Heart left ventricle (tissue), 16 donors: ENCODE measurements at regions of chr13 and their contacts with region 1.

Region 1: GRCh38 chr13:27533155-27533643 is 82.8 kb upstream of the MTIF3 start:
- DNase-seq: peak; percentile 79 to 92 (median 86)
- ATAC-seq: peak; percentile 79 to 98 (median 98)
- H3K4me3 ChIP-seq: peak overlapping the region in 9 of 12 donors; percentile 14 to 48 (median 37)
- H3K27ac ChIP-seq: no peak overlapping the region
- H3K4me1 ChIP-seq: peaks cover 0 to 8% (median 0%) of the 10 kb centered on the region in 12 donors
- H3K27me3 ChIP-seq: no peaks in the 10 kb centered on the region
- CTCF ChIP-seq: peak; percentile 86 to 97 (median 94)
- POLR2A ChIP-seq: no peak

Region 2: GRCh38 chr13:27374650-27375049 is 158.5 kb before region 1 on chr13:
- intact Hi-C with region 1: loop called in 4 of 10 experiments (anchors 5 to 10 kb)
- DNase-seq: peak in 4 of 5 donors; percentile 47 to 69 (median 58)
- ATAC-seq: peak; percentile 51 to 97 (median 96)
- H3K4me3 ChIP-seq: no peak overlapping the region
- H3K27ac ChIP-seq: no peak overlapping the region
- H3K4me1 ChIP-seq: peaks cover 0 to 5% (median 0%) of the 10 kb centered on the region in 12 donors
- H3K27me3 ChIP-seq: peaks cover 0 to 34% (median 14%) of the 10 kb centered on the region in 9 donors
- CTCF ChIP-seq: peak; percentile 61 to 86 (median 70)
- POLR2A ChIP-seq: no peak

Region 3: GRCh38 chr13:27406178-27406939 is 126.8 kb before region 1 on chr13:
- intact Hi-C with region 1: loop called in 3 of 10 experiments (anchors 10 kb)
- DNase-seq: no peak
- ATAC-seq: peak in 2 of 4 donors; percentile 31 to 47
- H3K4me3 ChIP-seq: no peak overlapping the region
- H3K27ac ChIP-seq: no peak overlapping the region
- H3K4me1 ChIP-seq: peaks cover 0 to 12% (median 7%) of the 10 kb centered on the region in 12 donors
- H3K27me3 ChIP-seq: peaks cover 0 to 9% (median 0%) of the 10 kb centered on the region in 9 donors
- CTCF ChIP-seq: peak; percentile 34 to 67 (median 52)
- POLR2A ChIP-seq: no peak

Region 4: GRCh38 chr13:27489456-27489855 is 43.7 kb before region 1 on chr13:
- intact Hi-C with region 1: no loop called
- DNase-seq: no peak
- ATAC-seq: no peak
- H3K4me3 ChIP-seq: no peak overlapping the region
- H3K27ac ChIP-seq: no peak overlapping the region
- H3K4me1 ChIP-seq: no peaks in the 10 kb centered on the region
- H3K27me3 ChIP-seq: no peaks in the 10 kb centered on the region
- CTCF ChIP-seq: no peak
- POLR2A ChIP-seq: no peak

Region 5: GRCh38 chr13:27620377-27621115 is 87.3 kb after region 1 on chr13 and contains the start of gene LNX2:
- intact Hi-C with region 1: loop called in 1 of 10 experiments (anchors 5 kb)
- DNase-seq: peak; percentile 98 to 99 (median 99)
- ATAC-seq: peak; percentile 98 to 100 (median 98)
- H3K4me3 ChIP-seq: peak within 1 kb of the TSS; percentile 66 to 98 (median 90)
- H3K27ac ChIP-seq: peak within 1 kb of the TSS; percentile 72 to 98 (median 96)
- H3K4me1 ChIP-seq: peaks cover 0 to 48% (median 33%) of the 10 kb centered on the region in 12 donors
- H3K27me3 ChIP-seq: no peaks in the 10 kb centered on the region
- CTCF ChIP-seq: peak in 1 of 12 donors; percentile 3
- POLR2A ChIP-seq: peak in 1 of 2 donors; percentile 96
- total RNA-seq, gene LNX2: 10.7 to 18.7 (median 14.9) TPM

Region 6: DNA sequence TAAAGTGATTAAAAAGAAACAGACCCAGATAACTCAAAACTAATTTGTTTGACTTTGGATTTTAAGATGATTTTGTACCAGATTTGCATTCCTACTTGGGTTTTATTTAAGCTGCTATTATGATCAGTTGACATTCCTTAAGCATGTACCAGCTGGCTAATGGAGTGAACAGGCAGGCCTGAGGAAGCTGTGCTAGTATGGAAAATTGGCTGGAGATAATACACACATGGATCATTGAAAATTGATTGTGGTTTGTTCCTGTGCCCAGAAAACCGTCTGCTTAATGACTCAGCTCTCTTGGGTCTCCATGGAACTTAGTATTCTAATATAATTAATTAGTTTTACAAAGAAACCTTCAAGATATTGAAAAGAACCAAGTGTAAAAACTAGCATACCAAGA is 111.1 kb after region 1 on chr13:
- intact Hi-C with region 1: no loop called
- DNase-seq: no peak
- ATAC-seq: peak in 2 of 4 donors; percentile 42 to 47
- H3K4me3 ChIP-seq: no peak overlapping the region
- H3K27ac ChIP-seq: peak overlapping the region in 1 of 12 donors; percentile 50
- H3K4me1 ChIP-seq: peaks cover 0 to 28% (median 12%) of the 10 kb centered on the region in 12 donors
- H3K27me3 ChIP-seq: no peaks in the 10 kb centered on the region
- CTCF ChIP-seq: no peak
- POLR2A ChIP-seq: no peak

Region 7: GRCh38 chr13:27712421-27712820 is 179.2 kb after region 1 on chr13:
- intact Hi-C with region 1: loop called in 9 of 10 experiments (anchors 2 to 10 kb)
- DNase-seq: peak in 1 of 5 donors; percentile 25
- ATAC-seq: peak in 2 of 4 donors; percentile 50 to 69
- H3K4me3 ChIP-seq: no peak overlapping the region
- H3K27ac ChIP-seq: no peak overlapping the region
- H3K4me1 ChIP-seq: no peaks in the 10 kb centered on the region
- H3K27me3 ChIP-seq: peaks cover 0 to 5% (median 0%) of the 10 kb centered on the region in 9 donors
- CTCF ChIP-seq: peak in 11 of 12 donors; percentile 25 to 63 (median 44)
- POLR2A ChIP-seq: no peak

Region 8: DNA sequence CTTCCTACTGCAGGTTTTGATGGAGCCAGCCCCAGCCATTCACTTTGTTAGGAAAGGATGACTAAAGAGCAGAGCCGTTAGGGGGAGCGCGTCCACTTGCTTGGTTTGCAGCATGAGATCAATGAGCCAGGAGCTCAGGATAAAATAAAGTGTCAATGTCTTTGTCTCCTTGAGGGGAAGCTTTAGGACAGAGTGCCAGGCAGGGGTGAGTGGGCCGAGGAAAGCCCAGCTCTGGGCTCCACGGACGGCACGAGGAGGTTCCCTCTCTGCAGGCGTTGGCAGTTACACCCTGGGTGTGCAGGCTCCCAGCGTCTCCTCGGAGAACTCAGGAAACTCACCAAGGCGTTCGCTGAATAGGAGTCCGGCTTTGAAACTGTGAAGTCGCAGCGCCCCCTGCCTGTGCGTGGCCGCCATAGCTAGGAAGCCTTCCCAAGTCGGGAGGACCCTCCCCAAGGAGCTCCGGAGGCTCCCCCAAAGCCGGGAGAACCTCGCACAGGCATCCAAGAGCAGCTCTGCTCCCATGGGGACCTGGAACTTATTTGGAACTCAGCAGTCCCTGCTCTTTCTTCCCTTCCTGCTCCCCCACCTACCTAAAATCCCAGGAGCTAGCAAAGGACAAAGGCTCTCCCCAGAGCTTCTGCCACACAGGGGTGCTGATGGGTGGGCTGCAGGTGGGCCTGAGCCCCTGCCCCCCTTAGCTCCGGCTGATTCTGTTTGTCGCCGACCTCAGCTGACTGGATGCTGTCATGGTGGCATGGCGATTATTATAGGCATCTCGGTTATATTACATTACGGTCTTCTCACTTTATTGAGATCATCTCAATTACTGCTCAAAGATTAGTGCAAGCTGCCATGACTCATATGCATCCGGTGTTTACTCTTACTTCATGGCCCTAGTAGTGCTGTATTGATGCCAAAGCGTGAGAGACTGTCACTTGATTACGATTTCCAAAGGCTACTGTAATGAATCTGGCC is 293.5 kb after region 1 on chr13:
- intact Hi-C with region 1: loop called (anchors 1 to 5 kb)
- DNase-seq: peak; percentile 68 to 87 (median 73)
- ATAC-seq: peak; percentile 75 to 94 (median 90)
- H3K4me3 ChIP-seq: peak overlapping the region in 7 of 12 donors; percentile 15 to 43 (median 21)
- H3K27ac ChIP-seq: no peak overlapping the region
- H3K4me1 ChIP-seq: peaks cover 0 to 16% (median 4%) of the 10 kb centered on the region in 12 donors
- H3K27me3 ChIP-seq: peaks cover 10 to 87% (median 65%) of the 10 kb centered on the region in 9 donors
- CTCF ChIP-seq: peak; percentile 82 to 97 (median 89)
- POLR2A ChIP-seq: no peak